CD4-positive, alpha-beta memory T cell (primary cell): ENCODE measurements at regions of chr5 and their contacts with region 1.

Region 1: GRCh38 chr5:13987843-13988464 is 43.5 kb upstream of the DNAH5 start:
- DNase-seq: no peak
- H3K4me3 ChIP-seq: no peak overlapping the region
- H3K4me3 Mint-ChIP-seq: no peak overlapping the region
- H3K27ac ChIP-seq: no peak overlapping the region
- H3K27ac Mint-ChIP-seq: no peak overlapping the region
- H3K4me1 ChIP-seq: no peaks in the 10 kb centered on the region
- H3K4me1 Mint-ChIP-seq: no peaks in the 10 kb centered on the region
- H3K27me3 ChIP-seq: no peaks in the 10 kb centered on the region
- H3K27me3 Mint-ChIP-seq: peaks cover 0 to 3% of the 10 kb centered on the region in 2 donors

Region 2: DNA sequence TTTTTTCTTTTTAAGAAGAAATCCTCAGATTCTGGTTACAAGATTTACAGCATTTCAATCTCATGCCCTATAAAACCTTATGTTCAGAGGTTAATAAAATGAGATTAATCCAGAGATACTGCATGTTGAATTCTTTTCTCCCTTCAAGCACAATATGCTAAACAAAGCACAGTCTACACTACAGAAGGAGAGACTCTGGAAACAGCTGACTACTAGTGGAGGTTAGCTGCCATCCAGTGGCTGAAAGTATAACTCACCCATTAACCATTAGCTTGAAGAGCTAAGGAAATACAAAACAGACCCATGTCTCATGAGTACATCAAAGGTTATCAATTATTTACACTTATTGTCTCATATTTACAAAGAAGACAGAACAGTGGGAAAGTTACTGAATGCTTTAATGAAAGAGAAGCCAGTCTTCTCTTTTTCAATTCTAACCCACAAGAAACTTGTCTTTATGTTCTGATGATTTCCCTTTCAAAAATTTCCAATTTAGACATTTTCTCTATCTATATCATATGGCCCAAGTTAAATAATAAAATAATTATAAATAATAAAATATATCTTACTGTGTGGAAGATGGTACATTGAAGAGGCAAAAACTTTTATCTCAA is 30.8 kb before region 1 on chr5:
- CTCF ChIA-PET with region 1: no interaction called
- POLR2A ChIA-PET with region 1: no interaction called
- intact Hi-C with region 1: no loop called
- DNase-seq: no peak
- H3K4me3 ChIP-seq: no peak overlapping the region
- H3K4me3 Mint-ChIP-seq: no peak overlapping the region
- H3K27ac ChIP-seq: no peak overlapping the region
- H3K27ac Mint-ChIP-seq: no peak overlapping the region
- H3K4me1 ChIP-seq: no peaks in the 10 kb centered on the region
- H3K4me1 Mint-ChIP-seq: no peaks in the 10 kb centered on the region
- H3K27me3 ChIP-seq: no peaks in the 10 kb centered on the region
- H3K27me3 Mint-ChIP-seq: no peaks in the 10 kb centered on the region

Region 3: DNA sequence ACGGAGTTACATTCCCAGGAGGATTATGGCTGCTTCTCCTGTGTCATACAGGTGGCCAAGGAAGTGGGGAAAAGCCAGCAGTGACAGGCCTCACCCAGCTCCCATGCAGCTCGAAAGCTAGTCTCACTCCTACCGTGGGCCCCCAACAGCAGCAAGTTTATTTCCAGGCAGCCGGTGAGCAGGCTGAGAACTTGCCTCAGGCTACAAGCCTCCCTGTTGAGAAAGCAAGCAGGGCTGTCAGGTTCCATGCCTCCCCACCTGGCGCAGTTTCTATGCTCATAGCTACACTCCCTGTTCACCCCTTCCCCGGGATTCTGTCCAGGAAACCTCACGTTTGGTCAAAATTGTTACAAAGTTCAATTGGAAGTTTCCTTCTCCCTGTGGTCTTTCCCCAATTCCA is 15.9 kb before region 1 on chr5:
- CTCF ChIA-PET with region 1: no interaction called
- POLR2A ChIA-PET with region 1: no interaction called
- intact Hi-C with region 1: no loop called
- DNase-seq: no peak
- H3K4me3 ChIP-seq: no peak overlapping the region
- H3K4me3 Mint-ChIP-seq: no peak overlapping the region
- H3K27ac ChIP-seq: no peak overlapping the region
- H3K27ac Mint-ChIP-seq: no peak overlapping the region
- H3K4me1 ChIP-seq: no peaks in the 10 kb centered on the region
- H3K4me1 Mint-ChIP-seq: no peaks in the 10 kb centered on the region
- H3K27me3 ChIP-seq: no peaks in the 10 kb centered on the region
- H3K27me3 Mint-ChIP-seq: no peaks in the 10 kb centered on the region

Region 4: DNA sequence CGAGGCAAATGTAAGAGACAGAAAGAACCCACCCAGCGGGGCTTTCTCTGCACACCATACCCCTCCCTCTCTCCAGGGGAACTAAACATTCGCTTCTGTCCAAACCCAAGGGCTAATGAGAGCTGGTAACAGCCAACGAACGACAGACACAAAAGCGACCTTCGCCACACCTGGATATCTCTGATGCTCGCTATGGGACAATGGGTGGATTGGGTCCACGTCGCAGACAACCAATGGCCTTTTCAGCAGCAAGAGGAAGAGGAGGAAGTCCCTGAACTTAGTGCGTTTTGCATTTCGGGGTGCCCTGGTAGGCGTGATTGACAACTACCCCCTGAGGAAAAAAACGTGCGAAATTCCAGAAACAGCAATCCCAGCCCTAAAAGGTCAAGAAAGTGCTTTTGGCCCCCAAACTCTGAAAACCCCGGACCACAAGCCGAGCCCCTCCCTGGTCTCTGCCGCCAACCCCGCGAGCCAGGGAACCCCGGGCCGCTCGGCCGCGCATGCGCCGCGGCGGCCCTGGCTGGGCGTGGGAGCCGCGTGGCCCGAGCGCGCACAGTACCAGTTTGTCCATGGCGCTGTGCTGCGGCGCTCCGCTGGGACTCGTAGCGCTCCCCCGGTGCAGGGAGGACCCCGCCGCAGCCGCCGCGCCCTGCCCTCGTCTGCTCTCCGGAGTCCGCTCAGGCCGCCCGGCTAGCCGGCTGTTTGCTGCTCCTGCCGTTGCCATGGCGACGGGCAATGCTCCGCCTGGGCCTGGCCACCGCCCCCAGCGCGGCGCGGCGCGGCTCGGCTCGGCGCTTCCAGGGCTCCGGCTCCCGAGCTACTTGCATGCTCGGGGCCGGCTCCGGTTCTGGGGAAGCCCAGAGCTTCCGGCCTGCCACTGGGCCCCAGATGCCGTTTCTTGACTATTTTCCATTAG is 23.4 kb after region 1 on chr5:
- CTCF ChIA-PET with region 1: no interaction called
- POLR2A ChIA-PET with region 1: no interaction called
- intact Hi-C with region 1: no loop called
- DNase-seq: peak in 2 of 5 donors; percentile 1 to 4
- H3K4me3 ChIP-seq: no peak overlapping the region
- H3K4me3 Mint-ChIP-seq: peak overlapping the region; percentile 55 to 85 (median 76)
- H3K27ac ChIP-seq: no peak overlapping the region
- H3K27ac Mint-ChIP-seq: no peak overlapping the region
- H3K4me1 ChIP-seq: peaks cover 12% of the 10 kb centered on the region
- H3K4me1 Mint-ChIP-seq: peaks cover 7 to 12% (median 11%) of the 10 kb centered on the region in 4 donors
- H3K27me3 ChIP-seq: no peaks in the 10 kb centered on the region
- H3K27me3 Mint-ChIP-seq: peaks cover 12 to 19% of the 10 kb centered on the region in 2 donors

Region 5: GRCh38 chr5:14063138-14063537 is 75.2 kb after region 1 on chr5:
- CTCF ChIA-PET with region 1: no interaction called
- POLR2A ChIA-PET with region 1: no interaction called
- intact Hi-C with region 1: no loop called
- DNase-seq: no peak
- H3K4me3 ChIP-seq: no peak overlapping the region
- H3K4me3 Mint-ChIP-seq: no peak overlapping the region
- H3K27ac ChIP-seq: no peak overlapping the region
- H3K27ac Mint-ChIP-seq: no peak overlapping the region
- H3K4me1 ChIP-seq: no peaks in the 10 kb centered on the region
- H3K4me1 Mint-ChIP-seq: no peaks in the 10 kb centered on the region
- H3K27me3 ChIP-seq: no peaks in the 10 kb centered on the region
- H3K27me3 Mint-ChIP-seq: no peaks in the 10 kb centered on the region

Region 6: GRCh38 chr5:14270209-14270702 is 282.3 kb after region 1 on chr5:
- CTCF ChIA-PET with region 1: interaction called, 3 read pairs
- POLR2A ChIA-PET with region 1: no interaction called
- intact Hi-C with region 1: loop called (anchors 5 kb)
- DNase-seq: no peak
- H3K4me3 ChIP-seq: no peak overlapping the region
- H3K4me3 Mint-ChIP-seq: no peak overlapping the region
- H3K27ac ChIP-seq: no peak overlapping the region
- H3K27ac Mint-ChIP-seq: no peak overlapping the region
- H3K4me1 ChIP-seq: no peaks in the 10 kb centered on the region
- H3K4me1 Mint-ChIP-seq: peaks cover 0 to 5% (median under 1%) of the 10 kb centered on the region in 4 donors
- H3K27me3 ChIP-seq: no peaks in the 10 kb centered on the region
- H3K27me3 Mint-ChIP-seq: peaks cover 5 to 28% of the 10 kb centered on the region in 2 donors